H1 (cell line): ENCODE measurements at regions of chr18 and their contacts with region 1.

Region 1: DNA sequence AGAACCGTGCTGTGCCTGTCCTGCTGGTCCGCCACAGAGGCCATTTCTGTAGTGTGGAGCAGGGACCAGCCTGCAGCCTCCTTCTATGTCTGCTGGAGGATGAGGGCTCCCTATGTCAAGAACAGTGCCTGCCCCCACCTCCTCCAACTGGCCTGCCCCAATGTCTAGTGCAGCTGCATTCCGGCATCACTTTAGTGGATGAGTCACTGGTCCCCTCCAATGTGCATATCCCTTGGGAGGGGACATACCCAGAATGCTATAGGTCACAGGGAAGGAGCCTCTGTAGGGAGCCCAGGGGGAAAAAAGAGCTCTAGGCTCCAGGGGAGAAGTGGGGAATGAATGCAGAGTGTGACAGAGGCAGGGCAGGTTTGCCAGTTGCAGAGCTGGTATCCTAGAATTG is 219.6 kb downstream of the CELF4 start:
- DNase-seq: no peak
- H3K4me3 ChIP-seq: no peak overlapping the region
- H3K27ac ChIP-seq: no peak overlapping the region
- H3K4me1 ChIP-seq: peaks cover 0 to 5% (median 2%) of the 10 kb centered on the region in 4 experiments; a peak in 6 of 7 replicates
- H3K27me3 ChIP-seq: peaks cover 0 to 3% (median 0%) of the 10 kb centered on the region in 4 experiments; a peak in 1 of 7 replicates
- CTCF ChIP-seq: no peak
- EP300 ChIP-seq: no peak
- POLR2A ChIP-seq: no peak
- RAD21 ChIP-seq: no peak

Region 2: DNA sequence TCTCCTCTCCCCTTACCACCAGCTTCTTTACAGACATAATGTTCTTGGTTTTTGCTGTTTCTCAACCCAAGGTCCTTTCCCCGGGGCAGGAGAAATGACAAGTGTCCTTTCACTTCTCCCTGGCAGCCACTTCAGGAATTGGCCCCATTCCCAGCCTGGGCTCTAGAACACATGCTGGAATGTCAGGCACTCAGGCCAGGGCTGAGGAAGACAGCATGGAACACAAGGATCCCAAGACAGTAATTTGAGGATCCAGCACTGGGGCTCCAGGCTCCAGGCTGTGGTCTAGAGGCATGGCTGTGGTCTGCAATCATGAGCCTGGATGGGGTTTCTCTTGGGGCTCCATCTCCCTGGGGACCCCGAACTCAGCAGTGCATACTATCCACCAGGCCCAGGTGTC is 18.2 kb after region 1 on chr18:
- CTCF ChIA-PET with region 1: interaction called, 34 read pairs
- POLR2A ChIA-PET with region 1: no interaction called
- DNase-seq: no peak
- H3K4me3 ChIP-seq: no peak overlapping the region
- H3K27ac ChIP-seq: no peak overlapping the region
- H3K4me1 ChIP-seq: peaks cover 7 to 33% (median 24%) of the 10 kb centered on the region in 4 experiments
- H3K27me3 ChIP-seq: peaks cover 21 to 66% (median 59%) of the 10 kb centered on the region in 4 experiments
- CTCF ChIP-seq: no peak
- EP300 ChIP-seq: no peak
- POLR2A ChIP-seq: no peak
- RAD21 ChIP-seq: no peak